Activated CD8-positive, alpha-beta memory T cell treated with anti-CD3 and anti-CD28 coated beads, Interleukin-2, amount 10 ng/mL, durations not matched to agents 7 days and 5 days (primary cell): ENCODE measurements at regions of chr13 and their contacts with region 1.

Region 1: GRCh38 chr13:99656092-99656745 is 154.9 kb downstream of the TM9SF2 start:
- DNase-seq: peak; percentile 91
- ATAC-seq: peak; percentile 59
- H3K4me3 Mint-ChIP-seq: peak overlapping the region; percentile 63
- H3K27ac Mint-ChIP-seq: peak overlapping the region; percentile 93
- H3K4me1 Mint-ChIP-seq: peaks cover 46% of the 10 kb centered on the region
- H3K27me3 Mint-ChIP-seq: peaks cover 4% of the 10 kb centered on the region

Region 2: DNA sequence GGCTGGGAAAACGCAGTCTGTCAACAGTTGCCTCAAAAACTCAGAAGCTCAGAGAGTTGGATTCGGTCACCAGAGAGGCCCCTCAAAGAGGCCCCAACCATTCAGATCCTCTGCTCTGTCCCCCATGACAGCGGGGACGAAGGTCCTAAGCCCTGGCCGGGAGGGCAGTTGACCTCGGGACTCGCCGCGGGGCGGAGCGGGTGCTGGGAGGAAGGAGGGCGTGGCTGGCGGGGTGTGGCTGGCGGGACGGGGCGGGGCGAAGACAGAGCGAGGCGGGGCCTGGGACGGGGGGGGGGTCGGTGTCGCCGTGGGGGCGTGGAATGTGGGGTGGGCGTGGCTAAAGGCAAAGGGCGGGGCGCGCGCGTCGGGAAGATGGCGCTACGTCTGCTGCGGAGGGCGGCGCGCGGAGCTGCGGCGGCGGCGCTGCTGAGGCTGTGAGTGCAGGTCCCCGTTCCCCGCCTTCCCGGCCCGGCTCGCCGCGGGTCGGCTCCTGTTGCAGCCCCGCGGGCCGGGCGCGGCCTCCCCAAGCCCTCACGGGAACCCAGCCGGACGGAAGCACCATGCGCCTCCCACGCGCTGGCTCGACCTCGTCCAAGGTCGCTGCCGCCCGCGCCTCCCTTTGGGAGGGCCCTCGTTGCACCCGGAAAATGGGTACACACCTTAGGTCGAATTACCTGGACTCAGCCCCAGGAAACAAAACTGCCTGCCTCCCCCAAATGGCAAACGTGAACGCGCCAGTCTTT is 49.7 kb before region 1 on chr13:
- CTCF ChIA-PET with region 1: interaction called, 11 read pairs
- DNase-seq: peak; percentile 91
- ATAC-seq: peak; percentile 91
- H3K4me3 Mint-ChIP-seq: peak within 1 kb of the TSS; percentile 85
- H3K27ac Mint-ChIP-seq: peak within 1 kb of the TSS; percentile 82
- H3K4me1 Mint-ChIP-seq: peaks cover 30% of the 10 kb centered on the region
- H3K27me3 Mint-ChIP-seq: no peaks in the 10 kb centered on the region

Region 3: DNA sequence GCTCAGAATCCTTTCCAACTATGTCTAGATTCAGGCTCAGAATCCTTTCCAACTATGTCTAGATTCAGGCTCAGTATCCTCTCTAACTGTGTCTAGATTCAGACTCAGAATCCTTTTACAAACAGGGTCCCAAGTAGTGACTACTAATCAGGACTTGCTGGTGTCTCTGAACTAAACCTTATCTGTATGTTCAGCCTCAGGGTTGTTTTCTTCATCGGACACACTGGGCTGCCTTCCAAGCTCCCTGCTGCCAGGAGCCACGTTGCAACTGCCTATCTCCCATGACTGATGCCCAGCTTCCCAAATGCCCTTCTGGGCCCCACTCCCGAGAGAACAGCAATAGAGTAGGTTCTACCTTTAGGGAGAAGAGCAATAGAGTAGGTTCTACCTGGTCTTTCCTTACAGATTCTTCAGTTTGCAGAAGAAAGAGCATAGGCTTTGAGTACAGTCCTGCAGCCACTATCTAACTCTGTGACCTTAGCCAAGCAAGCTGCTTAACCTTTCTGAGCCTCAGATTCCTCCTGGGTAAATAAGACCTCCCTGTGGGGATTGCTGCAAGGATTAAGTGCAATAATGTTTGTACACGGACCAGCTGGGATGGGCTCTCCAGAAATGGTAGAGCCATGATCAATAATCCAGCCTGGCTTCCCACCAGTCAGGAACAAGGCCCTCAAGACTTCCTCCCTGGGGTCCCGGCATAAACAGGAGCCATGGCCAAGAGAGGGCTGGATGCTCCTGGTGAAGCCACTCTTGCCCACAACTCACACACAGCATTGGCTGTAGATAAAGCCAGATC is 253.8 kb after region 1 on chr13:
- CTCF ChIA-PET with region 1: interaction called, 20 read pairs
- DNase-seq: no peak
- ATAC-seq: no peak
- H3K4me3 Mint-ChIP-seq: no peak overlapping the region
- H3K27ac Mint-ChIP-seq: no peak overlapping the region
- H3K4me1 Mint-ChIP-seq: peaks cover 55% of the 10 kb centered on the region
- H3K27me3 Mint-ChIP-seq: peaks cover 10% of the 10 kb centered on the region

Region 4: GRCh38 chr13:99969919-99970621 is 313.9 kb after region 1 on chr13:
- CTCF ChIA-PET with region 1: interaction called, 10 read pairs
- DNase-seq: peak; percentile 65
- ATAC-seq: peak; percentile 59
- H3K4me3 Mint-ChIP-seq: peak overlapping the region; percentile 67
- H3K27ac Mint-ChIP-seq: peak overlapping the region; percentile 84
- H3K4me1 Mint-ChIP-seq: peaks cover 16% of the 10 kb centered on the region
- H3K27me3 Mint-ChIP-seq: peaks cover 78% of the 10 kb centered on the region

Region 5: GRCh38 chr13:100514788-100515409 is 858.7 kb after region 1 on chr13:
- CTCF ChIA-PET with region 1: interaction called, 32 read pairs
- DNase-seq: peak; percentile 83
- ATAC-seq: peak; percentile 97
- H3K4me3 Mint-ChIP-seq: no peak overlapping the region
- H3K27ac Mint-ChIP-seq: no peak overlapping the region
- H3K4me1 Mint-ChIP-seq: peaks cover 32% of the 10 kb centered on the region
- H3K27me3 Mint-ChIP-seq: no peaks in the 10 kb centered on the region